Body of pancreas (tissue), 4 donors: ENCODE measurements at regions of chr1 and their contacts with region 1.

Region 1: DNA sequence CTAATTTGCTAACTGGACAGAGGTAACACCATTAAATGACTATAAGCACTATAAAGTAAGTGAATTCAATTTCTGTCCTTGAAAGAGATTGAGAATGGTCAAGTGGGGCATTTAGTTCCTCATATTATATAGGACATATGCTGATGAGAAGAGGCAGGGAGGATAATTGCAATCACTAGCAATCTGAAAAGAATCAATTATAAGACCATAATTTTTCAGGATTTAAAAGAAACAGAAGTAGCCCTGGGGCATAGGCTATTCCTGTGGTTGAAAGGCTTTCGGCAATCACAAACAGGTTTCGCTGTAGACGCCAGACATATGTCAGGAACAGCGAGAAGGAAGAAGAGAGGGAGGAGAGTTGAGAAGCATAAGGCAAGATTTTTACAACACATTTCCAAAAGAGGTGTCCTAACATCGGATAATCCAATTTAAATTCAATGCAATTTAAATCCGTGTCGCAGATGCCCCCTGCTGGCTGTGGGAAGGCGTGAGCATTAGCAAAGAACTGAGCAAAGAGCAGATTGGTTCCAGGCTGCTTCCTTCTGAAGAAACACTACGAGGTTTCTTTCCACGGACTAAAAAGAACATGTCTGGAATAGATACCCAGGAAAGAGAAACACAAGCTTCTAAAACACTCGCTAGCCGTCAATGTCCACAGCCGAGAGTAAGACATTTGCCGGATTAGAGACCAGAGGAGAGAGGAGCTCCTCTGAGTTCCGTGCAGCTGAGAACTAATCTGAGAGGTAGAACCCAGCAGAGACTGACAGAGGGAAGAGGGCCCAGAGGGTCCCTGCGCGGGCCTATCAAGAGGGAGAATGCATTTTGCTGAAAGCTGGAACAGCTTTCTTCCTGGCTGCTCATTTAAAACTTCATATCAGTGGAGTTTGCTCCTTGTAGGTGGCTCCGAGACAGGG is 27.9 kb downstream of the RGS5 start:
- DNase-seq: peak; percentile 47 to 69 (median 60)
- ATAC-seq: peak; percentile 68
- H3K4me3 ChIP-seq: no peak overlapping the region
- H3K27ac ChIP-seq: no peak overlapping the region
- H3K4me1 ChIP-seq: peaks cover 3% of the 10 kb centered on the region
- H3K27me3 ChIP-seq: no peaks in the 10 kb centered on the region
- CTCF ChIP-seq: peak; percentile 65 to 84 (median 78)
- POLR2A ChIP-seq: no peak

Region 2: GRCh38 chr1:162678439-162678838 is 496.3 kb before region 1 on chr1:
- intact Hi-C with region 1: no loop called
- DNase-seq: peak in 1 of 4 donors; percentile 19
- ATAC-seq: no peak
- H3K4me3 ChIP-seq: no peak overlapping the region
- H3K27ac ChIP-seq: no peak overlapping the region
- H3K4me1 ChIP-seq: peaks cover 11% of the 10 kb centered on the region
- H3K27me3 ChIP-seq: no peaks in the 10 kb centered on the region
- CTCF ChIP-seq: no peak
- POLR2A ChIP-seq: no peak

Region 3: DNA sequence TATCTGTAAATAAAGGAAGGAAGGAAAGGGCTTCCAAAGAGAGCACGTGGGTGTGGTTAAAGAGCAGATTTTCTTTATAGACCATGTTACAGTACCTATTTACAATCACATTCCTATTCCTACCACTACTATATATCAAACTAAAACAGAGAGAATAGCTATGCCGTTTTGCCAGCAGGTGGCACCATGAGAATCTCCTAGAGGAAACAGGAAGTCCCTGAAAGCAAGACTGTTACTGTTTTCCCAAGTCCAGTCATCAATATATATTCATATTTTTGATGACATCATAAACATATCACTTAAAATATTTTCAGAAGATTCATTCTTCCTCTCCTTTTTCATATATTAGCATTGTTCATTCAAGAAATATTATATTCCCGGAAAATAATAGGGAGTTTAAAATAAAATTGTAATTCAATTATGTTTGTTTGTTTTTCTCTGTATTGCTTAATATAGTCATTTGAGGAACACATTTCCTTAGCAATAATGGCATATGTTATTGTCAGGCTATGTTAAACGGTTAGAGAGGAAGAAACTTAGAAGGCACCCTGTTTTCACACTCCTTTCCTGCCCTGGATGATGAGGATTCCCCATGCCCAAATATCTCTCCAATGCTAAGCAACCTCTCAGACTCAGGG is 320.4 kb before region 1 on chr1:
- intact Hi-C with region 1: loop called (anchors 10 kb)
- DNase-seq: peak; percentile 66 to 76 (median 72)
- ATAC-seq: peak; percentile 71
- H3K4me3 ChIP-seq: no peak overlapping the region
- H3K27ac ChIP-seq: no peak overlapping the region
- H3K4me1 ChIP-seq: no peaks in the 10 kb centered on the region
- H3K27me3 ChIP-seq: no peaks in the 10 kb centered on the region
- CTCF ChIP-seq: peak; percentile 33 to 72 (median 66)
- POLR2A ChIP-seq: no peak